A673 (cell line): ENCODE measurements at regions of chr2 and their contacts with region 1.

Region 1: DNA sequence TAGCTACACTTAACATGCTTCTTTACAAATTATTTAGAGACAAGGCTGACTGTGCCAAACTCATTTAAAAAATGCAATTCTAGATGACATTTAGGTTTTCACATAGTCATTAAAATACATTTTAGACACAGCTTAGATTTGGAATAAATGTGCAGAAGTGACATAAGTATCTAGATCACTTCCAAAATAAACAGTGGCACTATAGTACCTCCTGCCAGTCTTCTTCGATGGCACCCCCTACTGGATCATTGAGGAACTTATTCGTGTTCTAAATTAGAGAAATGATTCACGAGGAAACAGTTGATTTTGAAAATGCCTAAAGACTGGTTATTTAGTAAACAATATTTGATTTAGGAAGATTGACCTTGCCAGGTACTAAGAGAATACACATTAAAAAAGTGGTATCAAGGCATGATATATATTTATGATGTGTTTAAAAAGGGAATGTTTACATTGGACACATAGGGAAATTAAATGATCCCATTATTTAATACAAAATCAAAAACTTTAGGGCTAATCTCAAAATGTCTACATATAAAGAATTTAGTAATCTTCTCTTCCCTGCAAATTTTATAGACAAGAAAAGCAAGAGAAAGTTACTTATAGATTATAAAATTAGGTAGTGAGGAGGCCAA is 323.9 kb downstream of the XIRP2 start:
- DNase-seq: peak; percentile 77
- H3K4me3 ChIP-seq: no peak overlapping the region
- H3K27ac ChIP-seq: no peak overlapping the region
- H3K4me1 ChIP-seq: peaks cover 5% of the 10 kb centered on the region
- H3K27me3 ChIP-seq: no peaks in the 10 kb centered on the region
- CTCF ChIP-seq: peak; percentile 82

Region 2: GRCh38 chr2:166539340-166540162 is 672.6 kb before region 1 on chr2:
- CTCF ChIA-PET with region 1: no interaction called
- POLR2A ChIA-PET with region 1: no interaction called
- intact Hi-C with region 1: loop called (anchors 2 kb)
- DNase-seq: peak; percentile 84
- H3K4me3 ChIP-seq: no peak overlapping the region
- H3K27ac ChIP-seq: no peak overlapping the region
- H3K4me1 ChIP-seq: no peaks in the 10 kb centered on the region
- H3K27me3 ChIP-seq: no peaks in the 10 kb centered on the region
- CTCF ChIP-seq: peak; percentile 86

Region 3: DNA sequence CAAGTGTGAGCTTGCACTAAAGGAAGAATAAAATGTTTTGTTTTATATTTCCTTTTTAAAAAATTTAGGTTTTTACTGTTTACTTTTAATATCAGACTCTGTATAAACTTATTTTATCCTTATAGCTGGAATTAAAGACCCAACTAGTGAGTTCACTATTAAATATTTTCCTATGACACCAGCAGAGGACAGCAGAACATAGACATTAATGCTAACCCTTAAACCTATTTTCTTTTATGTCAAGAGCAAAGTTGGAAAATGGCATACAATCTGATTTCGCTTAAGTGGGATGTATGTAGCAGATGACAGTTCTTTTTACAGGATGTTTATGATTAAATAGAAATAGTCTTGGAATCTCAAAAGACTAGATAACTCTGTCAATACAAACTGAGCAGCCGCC is 512.1 kb before region 1 on chr2:
- CTCF ChIA-PET with region 1: no interaction called
- POLR2A ChIA-PET with region 1: no interaction called
- intact Hi-C with region 1: loop called (anchors 2 kb)
- DNase-seq: peak; percentile 27
- H3K4me3 ChIP-seq: no peak overlapping the region
- H3K27ac ChIP-seq: no peak overlapping the region
- H3K4me1 ChIP-seq: no peaks in the 10 kb centered on the region
- H3K27me3 ChIP-seq: no peaks in the 10 kb centered on the region
- CTCF ChIP-seq: peak; percentile 47; the same call in 1 of the 2 replicates

Region 4: DNA sequence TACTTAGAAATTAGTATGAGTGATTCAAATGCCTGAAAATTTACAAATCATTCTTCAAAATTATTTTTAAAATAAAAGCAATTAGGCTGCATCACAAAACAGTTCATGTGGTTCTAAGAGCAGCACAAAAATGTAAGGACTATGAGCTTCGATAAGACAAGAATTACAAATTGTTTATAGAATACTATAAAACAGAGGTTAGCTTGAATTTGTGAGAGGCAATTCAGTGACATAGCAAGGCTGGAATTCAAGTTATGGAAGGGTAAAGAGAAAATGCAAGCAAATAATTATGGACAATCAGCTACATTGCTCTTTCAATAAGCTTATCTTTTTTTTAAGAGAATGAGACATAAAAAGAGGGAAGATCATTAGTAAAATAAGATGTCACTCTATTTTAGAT is 331.0 kb before region 1 on chr2:
- CTCF ChIA-PET with region 1: interaction called, 11 read pairs
- POLR2A ChIA-PET with region 1: no interaction called
- intact Hi-C with region 1: no loop called
- DNase-seq: no peak
- H3K4me3 ChIP-seq: no peak overlapping the region
- H3K27ac ChIP-seq: no peak overlapping the region
- H3K4me1 ChIP-seq: no peaks in the 10 kb centered on the region
- H3K27me3 ChIP-seq: no peaks in the 10 kb centered on the region
- CTCF ChIP-seq: no peak

Region 5: DNA sequence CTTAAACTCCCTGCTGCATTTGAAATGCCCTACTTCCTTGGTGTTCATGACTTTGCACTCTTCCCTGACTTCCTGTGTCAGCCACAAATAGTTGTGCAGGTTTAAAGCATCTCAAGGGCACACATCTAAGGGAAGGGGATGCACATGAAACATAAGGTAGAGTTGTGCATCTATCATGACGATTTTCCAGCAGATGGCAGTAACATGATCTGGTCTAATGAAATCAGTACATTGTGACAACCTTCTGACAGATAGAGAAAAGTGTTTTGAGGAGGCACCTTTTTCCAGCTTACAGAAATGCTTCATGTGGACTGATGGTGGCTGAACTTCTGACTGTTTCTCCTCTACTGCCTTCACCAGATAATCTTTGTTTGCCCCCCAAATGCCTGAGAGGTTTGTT is 85.0 kb before region 1 on chr2:
- CTCF ChIA-PET with region 1: no interaction called
- POLR2A ChIA-PET with region 1: no interaction called
- intact Hi-C with region 1: loop called (anchors 2 kb)
- DNase-seq: peak; percentile 40
- H3K4me3 ChIP-seq: no peak overlapping the region
- H3K27ac ChIP-seq: no peak overlapping the region
- H3K4me1 ChIP-seq: no peaks in the 10 kb centered on the region
- H3K27me3 ChIP-seq: no peaks in the 10 kb centered on the region
- CTCF ChIP-seq: peak; percentile 45